ENCODE measurements at regions of chr19 and their contacts with region 1.

Region 1: GRCh38 chr19:10864538-10864899 is 6.8 kb upstream of the CARM1 start:
- DNase-seq: peak; percentile 54 to 82 (median 70)
- ATAC-seq: peak; percentile 90
- H3K4me3 ChIP-seq: no peak overlapping the region
- H3K4me3 Mint-ChIP-seq: peak overlapping the region in 3 of 10 donors; percentile 3 to 53 (median 30)
- H3K27ac ChIP-seq: no peak overlapping the region
- H3K27ac Mint-ChIP-seq: peak overlapping the region in 8 of 9 donors; percentile 3 to 80 (median 42)
- H3K4me1 ChIP-seq: peaks cover 4 to 7% of the 10 kb centered on the region in 2 donors
- H3K4me1 Mint-ChIP-seq: peaks cover 11 to 28% (median 15%) of the 10 kb centered on the region in 7 donors
- H3K27me3 ChIP-seq: no peaks in the 10 kb centered on the region
- H3K27me3 Mint-ChIP-seq: no peaks in the 10 kb centered on the region

Region 2: DNA sequence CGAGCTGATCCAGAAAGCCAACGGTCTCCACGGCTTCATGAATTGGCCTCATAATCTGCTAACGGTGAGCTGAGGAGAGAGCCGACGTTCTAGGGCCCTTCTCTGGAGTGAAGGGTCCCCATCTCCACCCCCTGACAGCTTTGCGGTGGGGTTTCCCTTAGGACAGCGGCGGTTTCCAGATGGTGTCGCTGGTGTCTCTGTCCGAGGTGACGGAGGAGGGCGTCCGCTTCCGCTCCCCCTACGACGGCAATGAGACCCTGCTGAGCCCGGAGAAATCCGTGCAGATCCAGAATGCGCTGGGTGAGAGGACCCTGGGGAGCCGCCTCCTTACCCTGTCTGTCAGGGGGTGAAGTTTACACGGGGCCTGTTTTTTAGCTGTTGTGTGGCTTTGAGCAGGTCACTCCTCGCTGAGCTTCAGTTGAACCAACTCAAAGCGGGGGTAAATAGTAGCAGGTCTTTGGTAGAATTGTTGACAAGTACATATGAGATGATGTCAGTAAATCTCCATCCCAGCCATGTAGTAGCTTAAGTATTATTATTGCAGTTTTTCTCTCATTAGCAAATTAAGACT is 162.5 kb before region 1 on chr19:
- CTCF ChIA-PET with region 1: interaction called, 7 read pairs
- POLR2A ChIA-PET with region 1: interaction called, 4 read pairs
- intact Hi-C with region 1: loop called in 1 of 2 experiments (anchors 1 kb)
- DNase-seq: peak in 2 of 9 donors; percentile 13 to 31
- ATAC-seq: peak; percentile 14
- H3K4me3 ChIP-seq: peak overlapping the region; percentile 94
- H3K4me3 Mint-ChIP-seq: peak overlapping the region; percentile 90 to 98 (median 95)
- H3K27ac ChIP-seq: peak overlapping the region; percentile 77
- H3K27ac Mint-ChIP-seq: peak overlapping the region in 8 of 9 donors; percentile 63 to 93 (median 78)
- H3K4me1 ChIP-seq: peaks cover 0 to 3% of the 10 kb centered on the region in 2 donors
- H3K4me1 Mint-ChIP-seq: peaks cover 6 to 18% (median 12%) of the 10 kb centered on the region in 7 donors
- H3K27me3 ChIP-seq: no peaks in the 10 kb centered on the region
- H3K27me3 Mint-ChIP-seq: peaks cover 0 to 4% (median 0%) of the 10 kb centered on the region in 5 donors

Region 3: DNA sequence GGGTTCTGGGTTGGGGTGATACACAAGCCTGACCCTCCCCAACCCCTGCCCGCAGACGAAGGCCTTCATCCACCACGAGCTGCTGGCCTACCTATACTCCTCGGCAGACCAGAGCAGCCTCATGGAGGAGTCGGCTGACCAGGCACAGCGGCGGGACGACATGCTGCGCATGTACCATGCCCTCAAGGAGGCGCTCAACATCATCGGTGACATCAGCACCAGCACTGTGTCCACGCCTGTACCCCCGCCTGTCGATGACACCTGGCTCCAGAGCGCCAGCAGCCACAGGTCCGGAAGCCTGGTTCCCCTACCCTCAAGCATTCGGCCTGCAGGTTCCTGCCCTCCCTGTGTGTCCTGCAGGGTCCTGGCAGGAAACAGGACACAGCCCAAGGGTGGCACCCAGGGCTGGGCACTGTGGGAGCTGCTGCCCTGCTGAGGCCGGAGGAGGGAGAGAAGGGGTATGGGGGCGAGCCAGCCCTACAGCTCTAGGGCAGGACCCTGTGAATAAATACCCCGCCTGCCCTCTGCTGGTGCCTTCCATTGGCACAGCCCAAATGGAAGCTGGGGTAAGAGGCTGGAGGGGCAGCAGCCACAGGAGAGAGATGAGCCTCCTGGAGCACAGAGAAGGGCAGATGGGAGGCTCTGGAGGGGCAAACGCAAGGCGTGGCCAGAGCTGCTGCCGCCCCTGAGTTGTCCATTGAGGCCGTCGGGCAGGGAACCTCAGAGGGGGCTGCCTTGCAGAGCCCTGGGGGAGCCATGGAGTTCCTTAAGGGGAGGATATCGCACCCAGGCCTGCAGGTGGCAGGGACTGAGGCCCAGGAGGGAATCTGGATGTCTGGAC is 35.3 kb before region 1 on chr19:
- CTCF ChIA-PET with region 1: interaction called, 4 read pairs
- POLR2A ChIA-PET with region 1: no interaction called
- intact Hi-C with region 1: loop called in 1 of 2 experiments (anchors 1 kb)
- DNase-seq: no peak
- ATAC-seq: no peak
- H3K4me3 ChIP-seq: no peak overlapping the region
- H3K4me3 Mint-ChIP-seq: no peak overlapping the region
- H3K27ac ChIP-seq: no peak overlapping the region
- H3K27ac Mint-ChIP-seq: no peak overlapping the region
- H3K4me1 ChIP-seq: no peaks in the 10 kb centered on the region
- H3K4me1 Mint-ChIP-seq: peaks cover 0 to 2% (median 0%) of the 10 kb centered on the region in 7 donors
- H3K27me3 ChIP-seq: no peaks in the 10 kb centered on the region
- H3K27me3 Mint-ChIP-seq: no peaks in the 10 kb centered on the region

Region 4: DNA sequence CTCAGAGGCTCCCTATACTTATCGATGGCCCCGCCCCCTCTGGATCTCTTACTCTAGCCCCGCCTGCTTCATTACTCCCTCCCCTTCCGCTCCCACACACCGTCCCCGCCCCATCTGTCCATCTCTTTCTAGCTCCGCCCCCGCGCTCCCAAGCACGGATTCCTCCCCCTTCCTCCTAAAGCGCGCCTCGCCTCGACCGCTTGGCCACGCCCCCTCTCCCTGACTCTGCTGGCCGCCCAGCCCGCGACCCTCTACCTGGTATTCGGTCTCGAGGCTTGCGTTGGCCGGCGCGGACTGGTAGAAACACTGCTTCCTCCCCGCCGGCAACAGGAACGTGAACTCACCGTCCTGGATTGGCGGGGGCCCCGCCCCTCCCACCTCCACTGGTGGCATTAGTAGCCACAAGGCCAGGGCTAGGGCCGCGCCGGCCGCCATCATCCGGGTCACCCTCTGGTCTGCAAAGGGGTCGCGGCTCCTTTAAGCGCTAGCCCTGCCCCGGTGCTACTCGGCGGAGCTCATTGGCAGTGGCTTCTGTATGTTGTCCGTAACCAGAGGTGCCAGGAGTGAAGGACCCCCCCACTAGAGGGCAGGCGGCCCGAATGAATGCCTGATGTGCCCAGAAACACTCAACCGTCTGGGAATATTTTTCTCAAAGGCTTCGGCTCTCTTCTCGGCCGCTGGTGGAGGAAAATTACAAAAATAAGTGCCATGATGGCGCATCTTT is 28.6 kb before region 1 on chr19 and contains the start of gene TMED1:
- CTCF ChIA-PET with region 1: interaction called, 15 read pairs
- POLR2A ChIA-PET with region 1: interaction called, 6 read pairs
- intact Hi-C with region 1: loop called in 1 of 2 experiments (anchors 1 kb)
- DNase-seq: peak; percentile 81 to 97 (median 93)
- ATAC-seq: peak; percentile 92
- H3K4me3 ChIP-seq: peak within 1 kb of the TSS; percentile 98
- H3K4me3 Mint-ChIP-seq: peak within 1 kb of the TSS; percentile 82 to 99 (median 96)
- H3K27ac ChIP-seq: peak within 1 kb of the TSS; percentile 93
- H3K27ac Mint-ChIP-seq: peak within 1 kb of the TSS; percentile 98 to 100 (median 99)
- H3K4me1 ChIP-seq: peaks cover 8 to 13% of the 10 kb centered on the region in 2 donors
- H3K4me1 Mint-ChIP-seq: peaks cover 12 to 20% (median 15%) of the 10 kb centered on the region in 7 donors
- H3K27me3 ChIP-seq: no peaks in the 10 kb centered on the region
- H3K27me3 Mint-ChIP-seq: no peaks in the 10 kb centered on the region
- total RNA-seq, gene TMED1: 7.6 to 12.8 (median 9.9) TPM

Region 5: GRCh38 chr19:10884274-10884673 is 19.8 kb after region 1 on chr19:
- CTCF ChIA-PET with region 1: no interaction called
- POLR2A ChIA-PET with region 1: no interaction called
- intact Hi-C with region 1: no loop called
- DNase-seq: no peak
- ATAC-seq: no peak
- H3K4me3 ChIP-seq: no peak overlapping the region
- H3K4me3 Mint-ChIP-seq: no peak overlapping the region
- H3K27ac ChIP-seq: no peak overlapping the region
- H3K27ac Mint-ChIP-seq: no peak overlapping the region
- H3K4me1 ChIP-seq: peaks cover 0 to 2% of the 10 kb centered on the region in 2 donors
- H3K4me1 Mint-ChIP-seq: peaks cover 6 to 20% (median 11%) of the 10 kb centered on the region in 7 donors
- H3K27me3 ChIP-seq: no peaks in the 10 kb centered on the region
- H3K27me3 Mint-ChIP-seq: no peaks in the 10 kb centered on the region

Region 6: DNA sequence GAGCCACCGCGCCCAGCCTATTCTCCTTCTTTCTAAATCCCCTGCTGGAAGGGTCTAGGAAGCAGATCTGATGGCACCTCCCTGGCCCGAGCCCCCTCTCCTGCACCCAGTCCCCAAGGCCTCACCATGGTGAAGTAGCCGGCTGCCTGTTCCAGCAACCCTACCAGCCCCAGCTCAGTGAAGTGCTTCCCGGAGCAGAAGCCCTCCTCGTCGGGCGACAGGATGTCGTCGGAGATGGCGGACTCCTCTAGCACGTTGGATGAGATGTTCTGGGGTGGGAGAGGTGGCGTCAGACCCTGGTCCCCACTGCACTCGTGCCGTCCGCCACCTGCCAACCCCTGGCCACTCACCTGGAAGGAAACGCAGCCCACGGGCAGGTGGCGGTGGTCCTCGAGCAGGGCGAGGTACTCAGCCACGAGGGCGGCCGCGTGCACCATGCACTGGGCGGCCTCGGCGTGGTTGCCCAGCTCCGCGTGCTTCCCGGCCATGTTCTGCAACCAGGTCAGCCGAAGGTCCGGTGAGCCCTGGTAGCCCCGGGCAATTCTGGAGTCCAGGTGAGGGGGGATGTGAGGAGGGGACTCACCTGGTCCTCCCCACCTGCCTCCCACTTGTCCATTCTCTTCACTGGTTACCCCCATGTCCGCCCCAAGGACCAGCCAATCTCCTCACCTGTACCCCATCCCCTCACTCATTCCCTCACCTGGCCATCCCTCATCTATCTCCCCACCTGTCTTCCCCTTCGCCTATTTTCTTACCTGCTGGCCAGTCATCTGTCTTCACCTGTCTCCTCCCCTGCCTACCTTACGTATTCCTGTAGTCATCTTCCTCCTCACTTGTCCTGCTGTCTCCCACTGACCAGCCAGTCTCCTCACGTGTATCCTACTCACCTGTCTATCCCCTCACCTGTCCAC is 344.3 kb after region 1 on chr19:
- CTCF ChIA-PET with region 1: no interaction called
- POLR2A ChIA-PET with region 1: no interaction called
- intact Hi-C with region 1: no loop called
- DNase-seq: no peak
- ATAC-seq: no peak
- H3K4me3 ChIP-seq: no peak overlapping the region
- H3K4me3 Mint-ChIP-seq: no peak overlapping the region
- H3K27ac ChIP-seq: no peak overlapping the region
- H3K27ac Mint-ChIP-seq: peak overlapping the region in 1 of 9 donors; percentile 43
- H3K4me1 ChIP-seq: no peaks in the 10 kb centered on the region
- H3K4me1 Mint-ChIP-seq: peaks cover 0 to 5% (median 0%) of the 10 kb centered on the region in 7 donors
- H3K27me3 ChIP-seq: no peaks in the 10 kb centered on the region
- H3K27me3 Mint-ChIP-seq: peaks cover 0 to 11% (median 5%) of the 10 kb centered on the region in 5 donors